ENCODE measurements at regions of chr12 and their contacts with region 1.

Region 1: GRCh38 chr12:442235-442884 is 17.4 kb upstream of the B4GALNT3 start:
- DNase-seq: peak; percentile 59
- H3K4me3 ChIP-seq: no peak overlapping the region
- H3K27ac ChIP-seq: no peak overlapping the region
- H3K4me1 ChIP-seq: no peaks in the 10 kb centered on the region
- H3K27me3 ChIP-seq: peaks cover 2% of the 10 kb centered on the region in 2 experiments
- CTCF ChIP-seq: peak; percentile 73
- POLR2A ChIP-seq: no peak

Region 2: DNA sequence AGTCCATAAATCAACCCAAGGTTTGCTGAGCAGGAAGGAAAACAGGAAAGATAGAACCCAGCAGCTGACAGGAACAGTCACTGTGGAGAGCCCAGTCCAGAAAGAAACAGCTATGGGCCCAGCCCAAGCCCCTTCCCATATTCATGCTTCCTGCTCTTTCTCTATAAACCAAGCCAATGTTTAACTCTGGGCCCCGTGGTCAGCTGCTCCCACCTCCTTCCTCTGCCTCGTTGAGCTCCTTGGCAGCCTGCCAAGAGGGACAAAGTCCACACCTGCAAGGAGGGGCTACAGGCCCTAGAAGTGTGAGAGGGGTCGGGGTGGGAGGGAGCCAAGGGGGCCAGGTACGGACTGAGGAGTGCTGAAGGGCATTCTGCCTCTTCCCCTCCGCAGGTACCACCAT is 189.7 kb before region 1 on chr12:
- CTCF ChIA-PET with region 1: no interaction called
- POLR2A ChIA-PET with region 1: no interaction called
- dilution Hi-C with region 1: no loop called
- intact Hi-C with region 1: no loop called
- DNase-seq: no peak
- H3K4me3 ChIP-seq: no peak overlapping the region
- H3K27ac ChIP-seq: no peak overlapping the region
- H3K4me1 ChIP-seq: no peaks in the 10 kb centered on the region
- H3K27me3 ChIP-seq: peaks cover 0 to 7% of the 10 kb centered on the region in 2 experiments
- CTCF ChIP-seq: no peak
- POLR2A ChIP-seq: no peak

Region 3: GRCh38 chr12:332581-333205 is 109.7 kb before region 1 on chr12:
- CTCF ChIA-PET with region 1: no interaction called
- POLR2A ChIA-PET with region 1: no interaction called
- dilution Hi-C with region 1: no loop called
- intact Hi-C with region 1: no loop called
- DNase-seq: peak; percentile 27
- H3K4me3 ChIP-seq: no peak overlapping the region
- H3K27ac ChIP-seq: peak overlapping the region; percentile 42
- H3K4me1 ChIP-seq: peaks cover 8% of the 10 kb centered on the region
- H3K27me3 ChIP-seq: no peaks in the 10 kb centered on the region
- CTCF ChIP-seq: no peak
- POLR2A ChIP-seq: no peak

Region 4: GRCh38 chr12:389139-390096 is 52.9 kb before region 1 on chr12 and contains the start of gene KDM5A:
- CTCF ChIA-PET with region 1: no interaction called
- POLR2A ChIA-PET with region 1: no interaction called
- dilution Hi-C with region 1: no loop called
- intact Hi-C with region 1: no loop called
- DNase-seq: peak; percentile 94
- H3K4me3 ChIP-seq: peak within 1 kb of the TSS; percentile 67 to 96 (median 72)
- H3K27ac ChIP-seq: peak within 1 kb of the TSS; percentile 58
- H3K4me1 ChIP-seq: peaks cover 27% of the 10 kb centered on the region
- H3K27me3 ChIP-seq: no peaks in the 10 kb centered on the region
- CTCF ChIP-seq: no peak
- POLR2A ChIP-seq: peak; percentile 79
- total RNA-seq, gene KDM5A: 61.0 and 71.5 TPM in 2 replicates

Region 5: GRCh38 chr12:452667-453210 is 10.4 kb after region 1 on chr12:
- CTCF ChIA-PET with region 1: interaction called, 24 read pairs
- POLR2A ChIA-PET with region 1: no interaction called
- dilution Hi-C with region 1: no loop called
- intact Hi-C with region 1: no loop called
- DNase-seq: no peak
- H3K4me3 ChIP-seq: no peak overlapping the region
- H3K27ac ChIP-seq: no peak overlapping the region
- H3K4me1 ChIP-seq: no peaks in the 10 kb centered on the region
- H3K27me3 ChIP-seq: peaks cover 36% of the 10 kb centered on the region in 2 experiments
- CTCF ChIP-seq: peak in 1 of 2 donors; percentile 27
- POLR2A ChIP-seq: no peak

Region 6: DNA sequence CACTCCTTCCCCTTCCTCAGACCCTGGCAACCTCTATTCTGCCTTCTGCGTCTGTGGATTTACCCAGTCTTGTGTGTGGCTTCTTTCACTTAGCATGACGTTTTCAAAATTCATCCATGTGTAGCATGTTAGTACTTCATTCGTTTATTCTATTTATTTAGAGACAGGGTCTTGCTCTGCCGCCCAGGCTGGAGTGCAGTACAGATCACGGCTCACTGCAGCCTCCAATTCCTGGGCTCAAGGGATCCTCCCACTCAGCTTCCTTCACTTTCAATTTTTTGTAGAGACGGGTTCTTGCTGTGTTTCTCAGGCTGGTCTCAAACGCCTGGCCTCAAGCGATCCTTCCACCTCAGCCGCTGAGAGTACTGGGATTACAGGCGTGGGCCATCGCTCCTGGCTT is 54.4 kb after region 1 on chr12:
- CTCF ChIA-PET with region 1: interaction called, 11 read pairs
- POLR2A ChIA-PET with region 1: no interaction called
- dilution Hi-C with region 1: no loop called
- intact Hi-C with region 1: no loop called
- DNase-seq: no peak
- H3K4me3 ChIP-seq: no peak overlapping the region
- H3K27ac ChIP-seq: no peak overlapping the region
- H3K4me1 ChIP-seq: no peaks in the 10 kb centered on the region
- H3K27me3 ChIP-seq: peaks cover 10 to 17% of the 10 kb centered on the region in 2 experiments
- CTCF ChIP-seq: no peak
- POLR2A ChIP-seq: no peak

Region 7: DNA sequence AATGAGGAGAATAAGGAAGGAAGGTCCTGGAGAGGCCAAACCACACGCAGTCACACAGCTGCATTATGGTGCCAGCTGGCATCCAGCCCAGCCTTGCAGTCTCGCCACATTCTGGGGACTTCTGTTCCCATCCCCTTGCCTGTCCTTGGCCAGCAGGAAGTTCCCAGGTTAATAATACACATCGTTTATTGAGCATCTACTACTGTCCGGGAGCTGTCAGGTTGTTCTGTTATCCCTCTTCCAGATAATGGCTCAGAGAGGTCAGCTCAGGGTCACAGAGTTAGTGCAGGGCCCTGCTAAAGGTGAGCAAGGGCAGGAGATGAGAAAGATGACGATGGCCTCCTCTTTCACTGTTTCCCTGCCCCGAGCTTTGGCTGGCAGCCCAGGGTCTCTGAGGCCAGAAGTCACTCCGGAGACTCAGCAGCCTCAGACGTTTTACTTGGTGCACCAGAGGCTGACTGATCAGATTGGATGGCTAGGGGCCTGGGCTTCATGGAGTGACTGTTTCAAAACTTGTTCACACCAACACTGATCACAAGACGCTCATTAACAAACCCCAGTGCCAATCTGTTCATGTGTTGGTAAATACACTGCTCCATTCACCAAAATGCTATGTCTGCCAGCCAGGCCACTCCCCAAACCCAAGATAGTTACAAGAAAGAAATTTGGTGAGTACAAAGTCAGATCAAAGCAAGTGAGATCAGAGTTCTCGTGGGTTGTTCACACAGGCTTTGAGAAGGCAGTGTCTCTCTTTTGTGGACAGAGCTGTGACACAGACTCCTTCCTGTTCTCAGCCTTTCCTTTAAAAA is 96.6 kb after region 1 on chr12:
- CTCF ChIA-PET with region 1: interaction called, 119 read pairs
- POLR2A ChIA-PET with region 1: no interaction called
- dilution Hi-C with region 1: no loop called
- intact Hi-C with region 1: loop called (anchors 2 kb)
- DNase-seq: peak; percentile 80
- H3K4me3 ChIP-seq: no peak overlapping the region
- H3K27ac ChIP-seq: no peak overlapping the region
- H3K4me1 ChIP-seq: peaks cover 10% of the 10 kb centered on the region
- H3K27me3 ChIP-seq: peaks cover 14 to 15% of the 10 kb centered on the region in 2 experiments
- CTCF ChIP-seq: no peak
- POLR2A ChIP-seq: no peak

Region 8: GRCh38 chr12:552466-552865 is 110.1 kb after region 1 on chr12:
- CTCF ChIA-PET with region 1: interaction called, 173 read pairs
- POLR2A ChIA-PET with region 1: no interaction called
- dilution Hi-C with region 1: no loop called
- intact Hi-C with region 1: loop called (anchors 1 kb)
- DNase-seq: no peak
- H3K4me3 ChIP-seq: no peak overlapping the region
- H3K27ac ChIP-seq: no peak overlapping the region
- H3K4me1 ChIP-seq: no peaks in the 10 kb centered on the region
- H3K27me3 ChIP-seq: peaks cover 0 to 11% of the 10 kb centered on the region in 2 experiments
- CTCF ChIP-seq: no peak
- POLR2A ChIP-seq: no peak

Measured in endothelial cell of umbilical vein (primary cell).